Posterior vena cava (tissue), 2 donors: ENCODE measurements at regions of chr14 and their contacts with region 1.

Region 1: GRCh38 chr14:103057365-103058096 is at the start of gene CDC42BPB:
- DNase-seq: peak; percentile 95
- total RNA-seq, gene CDC42BPB: 81.1 to 89.3 TPM

Region 2: DNA sequence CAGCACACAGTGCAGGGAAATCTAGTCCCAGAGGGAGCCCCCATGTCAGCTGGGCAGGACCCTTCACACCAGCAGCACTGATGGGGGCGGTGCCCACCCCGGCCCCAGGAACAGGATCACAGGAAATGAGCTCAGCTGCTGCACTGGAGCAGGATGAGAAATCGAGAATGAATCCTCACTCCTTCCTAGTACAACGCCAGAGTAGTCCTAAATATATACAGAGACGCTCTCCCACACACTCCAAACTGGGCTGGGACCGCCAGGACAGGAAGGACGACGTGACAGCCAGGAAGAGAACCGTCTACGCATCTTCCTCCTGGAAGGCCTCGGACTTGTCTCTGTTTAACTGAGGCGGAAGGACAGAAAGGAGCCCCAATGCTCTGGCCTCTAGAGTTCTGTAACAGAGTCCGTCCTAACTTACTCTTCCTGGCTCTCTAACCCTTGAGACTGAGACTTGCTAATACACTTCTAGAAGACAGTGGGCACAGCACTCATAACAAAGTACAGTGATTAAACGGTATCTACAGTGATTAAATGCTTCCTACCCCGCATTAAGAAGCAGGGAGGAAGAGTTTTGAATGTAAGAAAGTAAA is 33.6 kb before region 1 on chr14:
- intact Hi-C with region 1: loop called in 1 of 2 experiments (anchors 5 kb)
- DNase-seq: peak; percentile 66

Region 3: GRCh38 chr14:103333754-103334643 is 276.5 kb after region 1 on chr14 and contains the start of gene EIF5:
- intact Hi-C with region 1: no loop called
- DNase-seq: peak; percentile 100
- total RNA-seq, gene EIF5: 191 to 232 TPM

Region 4: GRCh38 chr14:103699901-103700752 is 642.6 kb after region 1 on chr14:
- intact Hi-C with region 1: loop called in 1 of 2 experiments (anchors 5 kb)
- DNase-seq: no peak